CD8-positive, alpha-beta T cell (primary cell): ENCODE measurements at regions of chr2 and their contacts with region 1.

Region 1: DNA sequence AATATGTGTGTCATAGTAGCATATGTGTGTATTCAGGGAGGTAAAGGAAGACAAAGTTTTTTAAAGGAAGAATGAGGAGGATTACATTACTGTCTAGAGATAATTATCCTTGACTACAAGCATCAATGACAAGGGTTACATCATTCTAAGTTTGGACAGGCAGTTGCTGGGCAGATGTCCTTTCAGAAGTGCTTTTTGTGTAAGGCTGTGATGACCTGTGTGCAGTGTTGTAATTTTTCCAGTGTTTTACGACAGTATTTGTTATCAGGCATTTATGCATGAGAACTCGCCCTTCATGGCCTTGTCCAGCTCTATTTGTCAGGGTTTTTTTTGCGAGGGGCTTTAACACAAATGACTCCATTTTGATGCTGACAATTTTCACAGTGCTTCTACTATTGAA is 658.3 kb upstream of the NXPH2 start:
- DNase-seq: no peak
- ATAC-seq: no peak
- H3K4me3 ChIP-seq: no peak overlapping the region
- H3K4me3 Mint-ChIP-seq: no peak overlapping the region
- H3K27ac ChIP-seq: no peak overlapping the region
- H3K27ac Mint-ChIP-seq: no peak overlapping the region
- H3K4me1 ChIP-seq: no peaks in the 10 kb centered on the region
- H3K4me1 Mint-ChIP-seq: no peaks in the 10 kb centered on the region
- H3K27me3 ChIP-seq: no peaks in the 10 kb centered on the region
- H3K27me3 Mint-ChIP-seq: no peaks in the 10 kb centered on the region
- CTCF ChIP-seq: no peak

Region 2: GRCh38 chr2:139427164-139427563 is 11.3 kb before region 1 on chr2:
- CTCF ChIA-PET with region 1: no interaction called
- POLR2A ChIA-PET with region 1: no interaction called
- intact Hi-C with region 1: loop called in 1 of 2 experiments (anchors 1 kb)
- DNase-seq: no peak
- ATAC-seq: no peak
- H3K4me3 ChIP-seq: no peak overlapping the region
- H3K4me3 Mint-ChIP-seq: no peak overlapping the region
- H3K27ac ChIP-seq: no peak overlapping the region
- H3K27ac Mint-ChIP-seq: no peak overlapping the region
- H3K4me1 ChIP-seq: no peaks in the 10 kb centered on the region
- H3K4me1 Mint-ChIP-seq: no peaks in the 10 kb centered on the region
- H3K27me3 ChIP-seq: no peaks in the 10 kb centered on the region
- H3K27me3 Mint-ChIP-seq: no peaks in the 10 kb centered on the region
- CTCF ChIP-seq: no peak

Region 3: GRCh38 chr2:139613264-139613663 is 174.8 kb after region 1 on chr2:
- CTCF ChIA-PET with region 1: no interaction called
- POLR2A ChIA-PET with region 1: no interaction called
- intact Hi-C with region 1: no loop called
- DNase-seq: no peak
- ATAC-seq: no peak
- H3K4me3 ChIP-seq: no peak overlapping the region
- H3K4me3 Mint-ChIP-seq: no peak overlapping the region
- H3K27ac ChIP-seq: no peak overlapping the region
- H3K27ac Mint-ChIP-seq: no peak overlapping the region
- H3K4me1 ChIP-seq: no peaks in the 10 kb centered on the region
- H3K4me1 Mint-ChIP-seq: no peaks in the 10 kb centered on the region
- H3K27me3 ChIP-seq: no peaks in the 10 kb centered on the region
- H3K27me3 Mint-ChIP-seq: no peaks in the 10 kb centered on the region
- CTCF ChIP-seq: no peak